PC-3 (cell line): ENCODE measurements at regions of chr10 and their contacts with region 1.

Region 1: GRCh38 chr10:48811461-48811860 is 126.8 kb downstream of the WDFY4 start:
- DNase-seq: peak; percentile 24
- ATAC-seq: no peak
- H3K4me3 ChIP-seq: no peak overlapping the region
- H3K27ac ChIP-seq: no peak overlapping the region
- H3K4me1 ChIP-seq: no peaks in the 10 kb centered on the region
- H3K27me3 ChIP-seq: peaks cover 12% of the 10 kb centered on the region
- CTCF ChIP-seq: no peak

Region 2: DNA sequence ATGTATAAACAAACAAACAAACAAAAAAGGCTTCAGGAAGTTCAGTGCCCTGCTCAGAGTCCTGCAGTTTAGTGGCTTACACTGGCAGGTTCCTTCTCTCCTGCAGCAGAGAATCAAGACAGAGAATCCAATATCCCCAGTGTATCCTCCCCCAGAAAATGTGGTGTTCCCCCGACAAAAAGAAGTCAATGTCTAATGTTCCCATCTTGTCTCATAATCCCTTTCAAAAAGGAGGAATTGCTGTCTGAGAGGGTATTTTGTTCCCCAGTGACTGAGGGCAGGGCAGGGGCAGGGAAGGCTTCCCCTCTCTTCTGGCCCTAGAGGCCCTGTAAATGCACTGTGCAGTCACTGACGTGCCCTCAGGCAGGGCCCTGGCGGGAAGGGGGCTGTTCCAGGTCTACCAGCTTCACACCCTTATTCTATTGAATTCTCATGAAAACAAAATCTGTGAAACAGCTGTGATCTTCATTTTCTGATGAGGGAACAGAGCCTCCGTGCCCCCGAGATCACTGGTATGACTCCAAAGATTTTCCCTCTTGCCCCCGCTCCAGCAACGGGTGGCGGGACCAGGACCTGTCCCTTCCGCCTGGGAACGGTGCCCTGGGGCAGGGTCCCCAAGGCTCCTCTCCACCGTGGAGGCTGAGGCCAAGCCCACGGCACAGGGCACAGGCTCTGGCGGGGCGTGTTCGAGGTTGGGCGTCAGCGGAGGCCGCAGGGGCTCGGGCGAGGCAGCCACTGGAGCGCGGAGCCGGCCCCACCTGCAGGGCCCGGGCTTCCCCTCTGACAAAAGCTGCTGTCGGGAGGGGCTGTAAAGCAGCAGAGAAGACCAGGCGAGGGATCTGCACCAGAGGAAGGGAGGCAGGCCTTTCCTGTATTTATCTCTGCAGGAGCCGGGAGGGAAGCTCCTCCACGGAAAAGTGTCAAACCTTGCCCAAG is 140.2 kb before region 1 on chr10:
- CTCF ChIA-PET with region 1: no interaction called
- POLR2A ChIA-PET with region 1: no interaction called
- intact Hi-C with region 1: no loop called
- DNase-seq: no peak
- ATAC-seq: no peak
- H3K4me3 ChIP-seq: no peak overlapping the region
- H3K27ac ChIP-seq: no peak overlapping the region
- H3K4me1 ChIP-seq: no peaks in the 10 kb centered on the region
- H3K27me3 ChIP-seq: peaks cover 33% of the 10 kb centered on the region
- CTCF ChIP-seq: no peak

Region 3: GRCh38 chr10:48740016-48740707 is 71.3 kb before region 1 on chr10:
- CTCF ChIA-PET with region 1: no interaction called
- POLR2A ChIA-PET with region 1: no interaction called
- intact Hi-C with region 1: loop called (anchors 2 kb)
- DNase-seq: no peak
- ATAC-seq: no peak
- H3K4me3 ChIP-seq: no peak overlapping the region
- H3K27ac ChIP-seq: no peak overlapping the region
- H3K4me1 ChIP-seq: no peaks in the 10 kb centered on the region
- H3K27me3 ChIP-seq: peaks cover 87% of the 10 kb centered on the region
- CTCF ChIP-seq: no peak